Endothelial cell of umbilical vein (primary cell): ENCODE measurements at regions of chr7 and their contacts with region 1.

Region 1: GRCh38 chr7:90271753-90272152 is 26.8 kb downstream of the CFAP69 start:
- DNase-seq: no peak
- H3K4me3 ChIP-seq: no peak overlapping the region
- H3K27ac ChIP-seq: no peak overlapping the region
- H3K4me1 ChIP-seq: peaks cover 2% of the 10 kb centered on the region
- H3K27me3 ChIP-seq: no peaks in the 10 kb centered on the region
- CTCF ChIP-seq: no peak
- POLR2A ChIP-seq: no peak

Region 2: GRCh38 chr7:90290244-90291113 is 18.7 kb after region 1 on chr7:
- CTCF ChIA-PET with region 1: no interaction called
- POLR2A ChIA-PET with region 1: no interaction called
- dilution Hi-C with region 1: no loop called
- intact Hi-C with region 1: loop called (anchors 2 kb)
- DNase-seq: no peak
- H3K4me3 ChIP-seq: no peak overlapping the region
- H3K27ac ChIP-seq: no peak overlapping the region
- H3K4me1 ChIP-seq: no peaks in the 10 kb centered on the region
- H3K27me3 ChIP-seq: no peaks in the 10 kb centered on the region
- CTCF ChIP-seq: no peak
- POLR2A ChIP-seq: no peak